Activated CD4-positive, alpha-beta memory T cell treated with anti-CD3 and anti-CD28 coated beads for 36 hours (primary cell): ENCODE measurements at regions of chr5 and their contacts with region 1.

Region 1: GRCh38 chr5:88140856-88141752 is 127.5 kb downstream of the TMEM161B start:
- DNase-seq: peak; percentile 94
- H3K4me3 Mint-ChIP-seq: no peak overlapping the region
- H3K27ac Mint-ChIP-seq: no peak overlapping the region
- H3K4me1 Mint-ChIP-seq: peaks cover 17% of the 10 kb centered on the region
- H3K27me3 Mint-ChIP-seq: peaks cover 31% of the 10 kb centered on the region

Region 2: DNA sequence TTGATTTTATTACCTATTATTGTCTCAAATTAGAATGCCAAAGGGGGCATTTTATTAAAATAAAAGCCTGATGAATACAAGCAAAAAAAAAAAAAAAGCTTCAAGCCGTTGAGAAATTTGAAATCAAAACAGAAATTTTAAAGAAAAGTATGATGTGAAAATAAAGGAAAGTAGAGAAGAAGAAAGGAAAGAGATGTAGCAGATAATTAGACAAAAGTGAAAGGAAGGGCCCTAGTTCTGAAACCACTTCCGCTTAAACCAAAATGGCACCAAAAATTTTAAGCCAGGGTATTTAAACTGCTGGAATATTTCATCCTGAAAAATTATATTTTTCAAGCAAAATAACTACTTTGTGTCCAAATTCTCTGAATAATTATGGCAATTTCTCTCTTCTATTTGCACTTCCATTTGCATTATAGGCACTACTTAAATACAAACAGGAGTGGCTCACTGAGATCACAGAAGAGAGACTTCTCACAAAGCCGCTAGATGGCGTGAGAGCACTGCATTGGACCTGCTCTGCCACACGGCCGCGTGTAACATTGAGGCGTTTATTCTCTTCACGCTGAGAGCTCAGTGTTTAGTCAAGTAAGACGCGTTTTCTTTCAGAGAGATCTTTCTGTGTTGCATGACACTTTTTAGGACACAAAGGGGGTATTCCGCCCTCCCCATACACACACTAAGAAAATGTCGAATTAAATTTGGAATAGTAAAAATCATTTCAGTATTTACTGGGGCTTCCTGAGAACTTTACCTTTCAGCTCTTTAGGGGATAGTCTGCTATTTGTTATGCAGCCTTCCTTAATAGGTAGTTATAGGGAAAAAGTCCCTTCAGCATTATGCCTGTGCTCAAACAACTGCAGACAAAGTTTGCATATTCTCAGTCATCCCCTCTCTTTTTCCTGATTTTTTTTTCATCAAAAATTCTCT is 360.0 kb before region 1 on chr5:
- CTCF ChIA-PET with region 1: interaction called, 5 read pairs
- POLR2A ChIA-PET with region 1: no interaction called
- intact Hi-C with region 1: loop called (anchors 2 kb)
- DNase-seq: peak; percentile 82
- H3K4me3 Mint-ChIP-seq: no peak overlapping the region
- H3K27ac Mint-ChIP-seq: no peak overlapping the region
- H3K4me1 Mint-ChIP-seq: no peaks in the 10 kb centered on the region
- H3K27me3 Mint-ChIP-seq: peaks cover 18% of the 10 kb centered on the region

Region 3: GRCh38 chr5:88251048-88251711 is 110.1 kb after region 1 on chr5:
- CTCF ChIA-PET with region 1: no interaction called
- POLR2A ChIA-PET with region 1: no interaction called
- intact Hi-C with region 1: loop called (anchors 1 kb)
- DNase-seq: peak; percentile 43
- H3K4me3 Mint-ChIP-seq: no peak overlapping the region
- H3K27ac Mint-ChIP-seq: peak overlapping the region; percentile 73
- H3K4me1 Mint-ChIP-seq: peaks cover 62% of the 10 kb centered on the region
- H3K27me3 Mint-ChIP-seq: no peaks in the 10 kb centered on the region

Region 4: DNA sequence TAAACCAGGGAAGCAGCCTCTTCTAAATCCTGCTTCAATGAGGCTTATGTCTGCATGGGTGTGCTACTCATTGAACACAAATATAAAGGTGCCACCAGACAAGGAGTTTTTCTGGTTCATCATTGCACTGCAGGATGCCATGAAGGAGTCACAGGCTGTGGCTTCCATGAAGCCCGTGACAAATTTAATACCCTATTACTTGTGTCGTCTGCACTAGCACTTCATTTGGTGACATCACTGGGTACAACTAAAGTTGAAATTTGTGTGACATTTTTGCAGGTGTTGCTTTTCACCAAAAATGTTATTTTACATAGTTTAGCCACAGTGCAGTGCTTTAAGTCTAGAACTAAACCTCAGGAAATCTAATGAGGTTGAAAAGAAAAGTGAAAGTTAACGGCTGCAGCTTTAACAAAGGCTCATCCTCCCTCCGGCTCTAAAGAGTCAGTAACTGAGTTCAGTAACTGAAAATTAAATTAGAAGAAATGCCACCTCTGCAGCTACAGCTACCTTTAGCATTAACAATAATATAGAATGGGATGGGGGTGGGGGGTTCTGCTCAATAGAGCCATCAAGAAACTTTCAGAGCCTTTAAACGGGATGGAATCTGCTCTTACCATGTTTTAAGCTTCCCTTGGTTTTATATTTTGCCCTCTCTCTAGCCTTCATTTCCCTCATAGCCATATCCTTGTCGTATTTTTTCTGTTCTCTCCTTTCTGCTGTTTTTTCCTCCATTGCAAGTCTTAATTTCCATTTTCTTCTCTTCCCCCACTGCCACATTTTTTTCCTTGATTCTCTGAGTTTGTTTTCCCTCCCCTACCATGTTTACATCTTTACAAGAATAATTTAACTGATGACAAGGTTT is 361.3 kb after region 1 on chr5:
- CTCF ChIA-PET with region 1: no interaction called
- POLR2A ChIA-PET with region 1: no interaction called
- intact Hi-C with region 1: loop called (anchors 2 kb)
- DNase-seq: peak; percentile 12
- H3K4me3 Mint-ChIP-seq: peak overlapping the region; percentile 77
- H3K27ac Mint-ChIP-seq: peak overlapping the region; percentile 58
- H3K4me1 Mint-ChIP-seq: peaks cover 12% of the 10 kb centered on the region
- H3K27me3 Mint-ChIP-seq: no peaks in the 10 kb centered on the region

Region 5: GRCh38 chr5:88666761-88667495 is 525.8 kb after region 1 on chr5:
- CTCF ChIA-PET with region 1: no interaction called
- POLR2A ChIA-PET with region 1: no interaction called
- intact Hi-C with region 1: loop called (anchors 2 kb)
- DNase-seq: no peak
- H3K4me3 Mint-ChIP-seq: peak overlapping the region; percentile 71
- H3K27ac Mint-ChIP-seq: no peak overlapping the region
- H3K4me1 Mint-ChIP-seq: peaks cover 29% of the 10 kb centered on the region
- H3K27me3 Mint-ChIP-seq: peaks cover 75% of the 10 kb centered on the region

Region 6: GRCh38 chr5:88690409-88691229 is 549.5 kb after region 1 on chr5:
- CTCF ChIA-PET with region 1: interaction called, 5 read pairs
- POLR2A ChIA-PET with region 1: no interaction called
- intact Hi-C with region 1: loop called (anchors 2 kb)
- DNase-seq: peak; percentile 73
- H3K4me3 Mint-ChIP-seq: peak overlapping the region; percentile 68
- H3K27ac Mint-ChIP-seq: peak overlapping the region; percentile 74
- H3K4me1 Mint-ChIP-seq: peaks cover 25% of the 10 kb centered on the region
- H3K27me3 Mint-ChIP-seq: peaks cover 84% of the 10 kb centered on the region